Activated T-helper 1 cell treated with anti-CD3 and anti-CD28 coated beads, Interleukin-12 subunit alpha, Interleukin-12 subunit beta, Interleukin-2, Interleukin-4 antibody, amounts not matched to agents 30 ng/mL and 10 ng/mL and 1 ng/mL, durations not matched to agents 14 hours and 24 hours and 36 hours (primary cell): ENCODE measurements at regions of chr20 and their contacts with region 1.

Region 1: DNA sequence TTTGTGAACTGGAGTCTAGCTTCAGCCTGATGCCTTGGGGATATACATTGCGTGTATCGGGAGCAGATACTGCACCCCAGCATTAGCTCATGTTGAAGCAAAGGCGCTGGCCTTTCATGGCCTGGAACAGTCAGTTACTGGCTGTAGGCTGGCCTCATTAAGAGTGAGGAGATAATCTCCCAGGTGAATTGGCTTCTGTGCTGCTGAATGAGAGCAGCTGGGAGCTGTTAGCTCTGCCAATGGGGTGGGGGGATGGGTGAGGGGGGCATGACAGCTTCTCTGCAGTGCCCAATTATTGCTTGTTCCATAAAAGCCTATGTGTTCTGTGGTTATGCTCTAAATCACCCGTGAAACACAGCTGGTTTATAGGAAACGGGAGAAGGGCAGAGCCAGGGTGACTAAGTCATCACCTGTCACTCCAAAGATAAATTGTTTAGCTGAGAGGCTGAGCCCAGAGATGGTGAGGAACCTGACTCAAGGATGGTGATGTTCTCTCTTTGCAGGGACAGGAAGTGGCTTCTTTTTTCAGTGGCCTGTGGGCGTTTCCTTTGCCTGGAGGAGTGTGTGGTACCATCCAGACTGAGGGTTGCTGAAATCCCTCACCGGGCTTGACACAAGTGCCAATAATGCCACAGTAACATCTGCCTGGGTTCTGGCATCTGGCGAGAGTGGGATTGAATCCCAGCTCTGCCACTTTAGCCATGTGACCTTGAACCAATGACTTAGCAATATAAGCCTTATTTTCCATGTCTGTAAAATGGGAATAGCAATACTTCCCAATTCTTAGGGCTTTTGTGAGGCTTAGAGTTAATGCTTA is 170.8 kb downstream of the BCAS1 start:
- DNase-seq: peak; percentile 74
- H3K4me3 Mint-ChIP-seq: peak overlapping the region; percentile 69
- H3K27ac Mint-ChIP-seq: peak overlapping the region; percentile 87
- H3K4me1 Mint-ChIP-seq: peaks cover 56% of the 10 kb centered on the region
- H3K27me3 Mint-ChIP-seq: no peaks in the 10 kb centered on the region

Region 2: GRCh38 chr20:53884859-53885541 is 14.6 kb before region 1 on chr20:
- intact Hi-C with region 1: loop called (anchors 1 kb)
- DNase-seq: no peak
- H3K4me3 Mint-ChIP-seq: peak overlapping the region; percentile 17
- H3K27ac Mint-ChIP-seq: peak overlapping the region; percentile 45
- H3K4me1 Mint-ChIP-seq: peaks cover 40% of the 10 kb centered on the region
- H3K27me3 Mint-ChIP-seq: no peaks in the 10 kb centered on the region

Region 3: GRCh38 chr20:53934421-53935343 is 35.1 kb after region 1 on chr20:
- intact Hi-C with region 1: loop called (anchors 2 kb)
- DNase-seq: no peak
- H3K4me3 Mint-ChIP-seq: peak overlapping the region; percentile 72
- H3K27ac Mint-ChIP-seq: peak overlapping the region; percentile 94
- H3K4me1 Mint-ChIP-seq: peaks cover 71% of the 10 kb centered on the region
- H3K27me3 Mint-ChIP-seq: no peaks in the 10 kb centered on the region